ENCODE measurements at regions of chr7 and their contacts with region 1.

Region 1: DNA sequence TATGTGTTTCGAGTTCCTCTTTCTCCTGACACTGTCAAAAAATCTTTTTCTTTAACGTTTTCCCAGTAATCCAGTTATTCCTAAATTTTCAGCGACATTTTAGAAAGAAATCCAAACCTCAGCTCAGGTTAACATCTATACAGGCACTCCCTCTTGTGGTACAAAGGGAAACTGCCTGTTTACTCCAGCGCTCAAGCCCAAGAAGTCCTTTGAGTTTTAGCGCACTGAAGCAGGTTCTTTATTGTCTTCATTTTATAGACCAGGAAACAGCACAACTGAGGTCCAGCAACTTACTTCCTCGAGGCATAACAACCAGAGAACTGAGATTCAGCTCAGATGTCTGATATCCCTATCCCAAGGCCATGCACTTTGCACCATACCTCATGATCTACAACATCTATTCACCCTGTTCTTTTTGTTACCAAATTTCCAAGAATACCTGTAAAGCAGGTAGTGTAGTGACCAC is 287.2 kb upstream of the MKLN1 start:
- DNase-seq: no peak
- H3K4me3 ChIP-seq: no peak overlapping the region
- H3K27me3 ChIP-seq: no peaks in the 10 kb centered on the region
- CTCF ChIP-seq: peak; percentile 93

Region 2: DNA sequence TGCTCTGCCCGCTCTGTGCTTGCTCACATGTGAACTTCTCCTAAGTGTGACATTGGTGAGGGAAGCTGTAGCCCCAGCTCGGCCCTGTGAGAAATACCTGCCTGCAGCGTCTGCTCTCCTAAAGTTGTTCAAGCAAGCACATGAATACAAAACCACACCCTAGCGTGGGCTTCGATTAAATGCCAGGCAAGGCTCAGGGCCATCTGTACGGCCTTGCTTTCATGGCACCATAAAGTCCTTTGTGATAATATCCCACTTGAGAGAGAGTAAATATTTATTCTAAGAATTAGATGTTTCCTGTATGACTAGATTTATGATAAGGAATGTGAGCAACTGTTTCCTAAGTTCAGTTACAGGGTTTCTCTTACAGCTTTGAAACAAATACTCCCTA is 43.7 kb before region 1 on chr7:
- CTCF ChIA-PET with region 1: interaction called, 10 read pairs
- POLR2A ChIA-PET with region 1: no interaction called
- DNase-seq: no peak
- H3K4me3 ChIP-seq: no peak overlapping the region
- H3K27me3 ChIP-seq: no peaks in the 10 kb centered on the region
- CTCF ChIP-seq: no peak

Region 3: DNA sequence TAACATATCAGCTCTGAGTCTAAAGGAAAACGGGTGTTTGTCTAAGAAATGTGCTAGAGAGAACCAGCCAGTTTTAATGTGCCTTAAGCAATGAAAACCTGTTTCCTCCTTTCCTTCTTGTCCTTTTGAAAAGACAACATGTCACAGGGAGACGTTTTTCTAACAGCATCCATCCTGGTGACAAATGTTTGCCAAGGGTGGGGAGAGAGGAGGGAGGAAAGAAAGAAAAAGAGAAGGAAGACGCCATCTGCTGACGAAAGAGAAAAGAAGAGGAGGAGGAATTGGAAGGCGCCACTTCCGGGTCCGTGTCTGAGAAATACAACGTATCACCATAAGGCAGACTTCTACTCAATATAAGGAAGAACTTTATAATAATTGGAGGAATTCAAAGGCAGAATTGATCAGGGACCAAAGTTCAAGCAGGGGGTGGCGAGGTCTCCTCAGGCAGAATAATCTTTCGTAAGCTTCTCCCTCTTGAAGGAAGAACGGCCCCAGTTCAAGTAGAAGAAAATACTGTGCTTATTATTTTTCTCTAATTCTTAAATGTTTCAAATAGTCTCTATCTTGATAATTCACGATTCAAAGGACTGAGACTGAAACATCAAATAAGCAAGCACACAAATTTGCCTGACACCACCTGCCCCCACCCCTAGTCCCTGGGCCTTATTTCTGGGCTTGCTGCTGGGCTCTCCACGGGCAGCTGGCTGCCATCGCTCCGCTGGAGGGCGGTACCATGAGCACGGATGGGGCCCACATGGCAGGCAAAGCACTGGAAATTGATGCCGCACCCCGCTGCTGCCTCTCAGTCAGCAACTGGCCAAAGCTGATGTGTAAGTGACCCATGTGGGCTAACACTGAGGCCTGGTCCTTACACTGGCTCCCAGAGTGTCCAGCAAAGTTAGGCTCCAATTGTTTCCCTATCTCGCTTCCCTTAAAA is 32.8 kb before region 1 on chr7:
- CTCF ChIA-PET with region 1: interaction called, 10 read pairs
- POLR2A ChIA-PET with region 1: no interaction called
- DNase-seq: no peak
- H3K4me3 ChIP-seq: no peak overlapping the region
- H3K27me3 ChIP-seq: no peaks in the 10 kb centered on the region
- CTCF ChIP-seq: peak; percentile 57

Region 4: GRCh38 chr7:131412031-131412430 is 371.5 kb after region 1 on chr7:
- CTCF ChIA-PET with region 1: no interaction called
- POLR2A ChIA-PET with region 1: interaction called, 19 read pairs
- DNase-seq: no peak
- H3K4me3 ChIP-seq: no peak overlapping the region
- H3K27me3 ChIP-seq: no peaks in the 10 kb centered on the region
- CTCF ChIP-seq: no peak